ENCODE measurements at regions of chr19 and their contacts with region 1.

Region 1: DNA sequence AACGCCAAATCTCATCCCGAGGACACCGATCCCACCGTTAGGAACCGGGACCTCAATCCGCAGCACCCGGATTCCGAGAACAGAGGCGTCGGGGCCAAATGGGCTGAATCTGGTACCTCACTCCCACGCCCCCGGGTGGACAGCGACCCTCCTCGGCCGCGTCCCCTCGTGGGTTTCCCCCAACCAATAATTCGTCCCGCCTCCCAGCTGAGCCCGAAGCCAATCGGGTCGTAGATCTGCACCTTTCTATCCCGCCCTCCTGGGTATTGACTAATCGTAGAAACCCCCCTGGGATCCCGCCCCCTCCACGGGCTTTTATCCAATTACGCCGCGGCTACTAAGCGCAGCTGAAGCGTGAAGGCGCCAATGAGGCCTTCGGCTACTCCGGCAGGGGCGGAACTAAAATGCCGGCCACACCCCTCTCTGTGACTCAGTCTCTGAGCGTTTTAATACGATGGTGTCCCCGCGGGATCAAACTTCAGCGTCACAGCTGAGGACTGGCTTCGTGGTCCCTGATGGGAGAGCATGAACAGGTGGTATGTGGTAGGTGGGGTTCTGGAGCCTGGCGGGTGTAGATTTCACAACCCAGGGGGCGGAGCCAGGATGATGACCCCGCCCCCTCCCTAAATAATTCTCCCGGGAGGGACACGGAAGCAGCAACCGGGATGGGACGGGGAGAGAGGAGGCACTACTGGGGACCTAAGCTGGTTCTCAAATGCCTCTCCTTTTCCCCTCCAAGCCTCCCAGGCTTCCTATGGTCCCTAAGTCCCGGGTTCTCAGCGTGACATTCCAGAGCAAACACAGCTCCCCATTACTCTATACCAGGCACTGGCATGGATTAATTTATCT is at the starts of genes CCDC159 and TMEM205:
- DNase-seq: peak; percentile 99 to 100 (median 100)
- H3K4me3 ChIP-seq: peak within 1 kb of the TSS; percentile 51 to 92 (median 78)
- H3K27ac ChIP-seq: peak within 1 kb of the TSS; percentile 72 to 89
- H3K4me1 ChIP-seq: peaks cover 7 to 47% (median 41%) of the 10 kb centered on the region in 4 experiments
- H3K27me3 ChIP-seq: no peaks in the 10 kb centered on the region

Region 2: GRCh38 chr19:11279496-11280236 is 66.7 kb before region 1 on chr19:
- CTCF ChIA-PET with region 1: no interaction called
- POLR2A ChIA-PET with region 1: no interaction called
- DNase-seq: peak; percentile 89 to 94 (median 94)
- H3K4me3 ChIP-seq: peak overlapping the region in 1 of 7 experiments; percentile 49
- H3K27ac ChIP-seq: no peak overlapping the region
- H3K4me1 ChIP-seq: peaks cover 7 to 13% (median 11%) of the 10 kb centered on the region in 4 experiments
- H3K27me3 ChIP-seq: peaks cover 0 to 49% (median 12%) of the 10 kb centered on the region in 5 experiments

Region 3: GRCh38 chr19:11374433-11375142 is 28.3 kb after region 1 on chr19 and contains the start of gene SWSAP1:
- CTCF ChIA-PET with region 1: interaction called, 5 read pairs
- POLR2A ChIA-PET with region 1: interaction called, 10 read pairs
- DNase-seq: peak; percentile 99 to 100 (median 100)
- H3K4me3 ChIP-seq: peak within 1 kb of the TSS; percentile 62 to 94 (median 82)
- H3K27ac ChIP-seq: peak within 1 kb of the TSS; percentile 85 to 92
- H3K4me1 ChIP-seq: peaks cover 15 to 50% (median 43%) of the 10 kb centered on the region in 4 experiments
- H3K27me3 ChIP-seq: no peaks in the 10 kb centered on the region

Measured in common myeloid progenitor, CD34-positive (primary cell).